Psoas muscle (tissue), 8 donors: ENCODE measurements at regions of chr2 and their contacts with region 1.

Region 1: DNA sequence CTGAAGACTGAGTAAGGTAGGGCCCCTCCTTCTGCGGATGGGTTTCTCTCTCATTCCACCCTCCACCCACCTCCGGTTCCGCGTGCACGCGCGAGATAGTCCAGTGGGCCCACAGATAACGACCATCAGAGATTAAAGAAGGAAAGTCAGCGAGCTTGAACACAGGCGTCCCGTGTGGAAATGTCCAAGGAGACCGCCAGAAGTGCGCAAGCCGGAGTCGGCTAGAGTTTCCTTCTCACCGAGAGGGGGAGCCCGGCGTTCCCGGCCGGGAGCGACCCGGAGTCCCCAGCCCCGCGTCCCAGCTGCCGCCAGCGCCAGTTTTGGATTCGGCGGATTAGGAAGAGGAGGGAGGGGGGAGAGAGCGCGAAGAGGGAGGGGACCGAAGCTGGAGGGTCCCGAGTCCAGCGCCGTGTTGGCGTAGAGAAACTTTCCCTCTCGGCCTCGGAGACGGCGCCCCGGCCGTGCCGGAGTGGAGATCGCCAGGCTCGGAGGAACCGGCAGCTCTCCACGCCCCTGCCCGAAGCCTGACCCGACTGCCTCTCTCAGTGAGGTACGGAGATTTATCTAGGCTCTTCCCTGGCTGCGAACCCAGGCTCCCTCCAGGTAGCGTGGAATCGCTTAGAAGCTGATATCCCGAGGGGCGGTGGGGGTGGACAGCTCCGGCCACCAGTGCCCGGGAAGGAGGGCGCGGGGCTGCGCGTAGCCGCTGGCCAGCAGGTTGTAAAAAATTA is at the start of gene GULP1:
- DNase-seq: peak; percentile 81 to 89
- ATAC-seq: peak; percentile 83 to 89 (median 88)
- H3K4me3 ChIP-seq: peak within 1 kb of the TSS; percentile 94
- H3K27ac ChIP-seq: peak within 1 kb of the TSS; percentile 88
- H3K4me1 ChIP-seq: peaks cover 19% of the 10 kb centered on the region
- H3K27me3 ChIP-seq: no peaks in the 10 kb centered on the region
- CTCF ChIP-seq: peak; percentile 67
- total RNA-seq, gene GULP1: 9.3 to 15.9 (median 13.5) TPM

Region 2: GRCh38 chr2:188333751-188334524 is 42.2 kb after region 1 on chr2:
- intact Hi-C with region 1: loop called in 1 of 2 experiments (anchors 5 kb)
- DNase-seq: peak in 1 of 2 donors; percentile 13
- ATAC-seq: peak; percentile 93 to 99 (median 96)
- H3K4me3 ChIP-seq: peak overlapping the region; percentile 33
- H3K27ac ChIP-seq: peak overlapping the region; percentile 76
- H3K4me1 ChIP-seq: peaks cover 30% of the 10 kb centered on the region
- H3K27me3 ChIP-seq: no peaks in the 10 kb centered on the region
- CTCF ChIP-seq: no peak

Region 3: DNA sequence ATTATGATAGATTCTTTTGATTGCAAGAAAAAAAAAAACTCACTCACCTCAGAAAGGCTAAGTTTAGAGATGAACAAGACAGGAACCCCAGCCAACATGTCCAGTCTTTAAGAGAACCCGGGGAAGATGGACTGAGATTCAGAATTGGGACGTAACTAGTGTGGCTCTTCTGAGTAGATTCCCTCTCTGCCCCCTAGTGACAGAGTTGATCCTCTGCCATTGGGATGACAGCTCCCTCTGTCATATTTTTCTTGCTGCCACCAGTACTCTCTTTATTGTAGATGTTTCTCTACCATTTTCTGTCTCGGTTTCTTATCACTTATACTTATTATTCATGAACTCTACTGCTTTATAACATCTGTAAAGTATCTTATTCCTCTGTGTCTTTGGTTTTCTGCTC is 77.6 kb after region 1 on chr2:
- intact Hi-C with region 1: loop called in 1 of 2 experiments (anchors 5 kb)
- DNase-seq: no peak
- ATAC-seq: peak; percentile 66 to 93 (median 74)
- H3K4me3 ChIP-seq: no peak overlapping the region
- H3K27ac ChIP-seq: no peak overlapping the region
- H3K4me1 ChIP-seq: no peaks in the 10 kb centered on the region
- H3K27me3 ChIP-seq: no peaks in the 10 kb centered on the region
- CTCF ChIP-seq: peak; percentile 77

Region 4: GRCh38 chr2:188378371-188378950 is 86.7 kb after region 1 on chr2:
- intact Hi-C with region 1: loop called in 1 of 2 experiments (anchors 5 kb)
- DNase-seq: no peak
- ATAC-seq: peak; percentile 39 to 65 (median 54)
- H3K4me3 ChIP-seq: no peak overlapping the region
- H3K27ac ChIP-seq: peak overlapping the region; percentile 0
- H3K4me1 ChIP-seq: peaks cover 30% of the 10 kb centered on the region
- H3K27me3 ChIP-seq: no peaks in the 10 kb centered on the region
- CTCF ChIP-seq: no peak